GM10248 (cell line): ENCODE measurements at regions of chr15 and their contacts with region 1.

Region 1: GRCh38 chr15:94655249-94655880 is 424.0 kb downstream of the MCTP2 start:
- DNase-seq: no peak
- CTCF ChIP-seq: no peak

Region 2: GRCh38 chr15:94631608-94632007 is 23.8 kb before region 1 on chr15:
- CTCF ChIA-PET with region 1: interaction called, 10 read pairs
- POLR2A ChIA-PET with region 1: no interaction called
- DNase-seq: peak; percentile 10
- CTCF ChIP-seq: no peak

Region 3: DNA sequence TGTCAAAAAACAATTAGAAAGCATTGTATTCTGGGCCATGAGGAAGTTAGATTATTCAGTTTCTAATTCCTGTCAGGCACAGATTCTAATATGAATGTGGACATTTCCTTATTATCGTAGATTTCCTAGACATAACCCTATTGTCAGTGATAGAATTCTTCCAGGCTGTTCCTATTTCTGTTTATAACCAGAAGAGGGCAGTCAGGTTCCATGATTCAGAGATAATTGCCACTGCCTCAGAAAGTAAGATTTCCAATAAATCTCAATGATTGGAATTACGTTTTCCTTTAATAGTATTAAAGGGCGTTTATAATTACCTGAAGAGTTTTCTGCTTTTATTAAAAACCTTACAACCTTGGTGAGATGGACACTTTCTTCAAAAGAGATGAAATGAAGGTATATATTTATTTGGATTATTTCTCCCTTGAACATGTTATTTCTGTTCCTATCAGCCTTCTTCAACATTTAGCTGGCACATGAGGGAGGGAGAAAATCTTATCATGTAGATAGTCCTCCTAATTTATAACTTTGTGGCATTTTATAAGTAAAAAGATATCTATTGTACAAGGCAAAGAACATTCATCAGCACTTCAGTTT is 15.2 kb after region 1 on chr15:
- CTCF ChIA-PET with region 1: interaction called, 11 read pairs
- POLR2A ChIA-PET with region 1: no interaction called
- DNase-seq: peak; percentile 33
- CTCF ChIP-seq: peak; percentile 56

Region 4: GRCh38 chr15:94785091-94785490 is 129.7 kb after region 1 on chr15:
- CTCF ChIA-PET with region 1: no interaction called
- POLR2A ChIA-PET with region 1: no interaction called
- DNase-seq: no peak
- CTCF ChIP-seq: no peak